ENCODE measurements at regions of chr7 and their contacts with region 1.

Region 1: GRCh38 chr7:156747691-156748090 is 107.1 kb downstream of the RNF32 start:
- DNase-seq: no peak
- H3K4me3 ChIP-seq: no peak overlapping the region
- H3K27ac ChIP-seq: no peak overlapping the region
- H3K4me1 ChIP-seq: no peaks in the 10 kb centered on the region; a peak in 1 of 4 replicates
- H3K27me3 ChIP-seq: no peaks in the 10 kb centered on the region
- CTCF ChIP-seq: no peak
- EP300 ChIP-seq: no peak
- RAD21 ChIP-seq: no peak

Region 2: DNA sequence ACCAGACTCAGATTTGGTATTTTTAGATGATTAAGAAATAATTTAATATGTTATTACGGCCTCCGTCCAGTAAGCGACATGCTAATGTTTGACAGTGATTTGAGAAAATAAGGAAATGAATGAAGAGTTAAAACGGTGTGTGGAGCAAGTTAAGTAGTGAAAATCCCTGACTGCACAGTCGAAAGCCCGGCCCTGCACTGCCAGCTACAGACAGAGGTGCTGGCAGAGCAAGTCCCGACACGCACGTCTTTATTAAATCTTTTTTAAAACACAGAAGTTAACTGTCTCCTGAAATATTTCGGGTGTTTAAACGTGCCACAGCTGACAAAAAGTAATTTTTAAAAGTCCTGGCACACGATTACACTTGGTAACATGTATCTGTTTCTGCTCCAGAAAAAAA is 400.6 kb before region 1 on chr7:
- CTCF ChIA-PET with region 1: no interaction called
- POLR2A ChIA-PET with region 1: no interaction called
- DNase-seq: no peak
- H3K4me3 ChIP-seq: peak overlapping the region; percentile 42 to 56
- H3K27ac ChIP-seq: no peak overlapping the region
- H3K4me1 ChIP-seq: peaks cover 0 to 4% of the 10 kb centered on the region in 2 experiments; a peak in 1 of 4 replicates
- H3K27me3 ChIP-seq: peaks cover 36% of the 10 kb centered on the region; the same call in 1 of the 2 replicates
- CTCF ChIP-seq: no peak
- EP300 ChIP-seq: no peak
- RAD21 ChIP-seq: no peak

Region 3: DNA sequence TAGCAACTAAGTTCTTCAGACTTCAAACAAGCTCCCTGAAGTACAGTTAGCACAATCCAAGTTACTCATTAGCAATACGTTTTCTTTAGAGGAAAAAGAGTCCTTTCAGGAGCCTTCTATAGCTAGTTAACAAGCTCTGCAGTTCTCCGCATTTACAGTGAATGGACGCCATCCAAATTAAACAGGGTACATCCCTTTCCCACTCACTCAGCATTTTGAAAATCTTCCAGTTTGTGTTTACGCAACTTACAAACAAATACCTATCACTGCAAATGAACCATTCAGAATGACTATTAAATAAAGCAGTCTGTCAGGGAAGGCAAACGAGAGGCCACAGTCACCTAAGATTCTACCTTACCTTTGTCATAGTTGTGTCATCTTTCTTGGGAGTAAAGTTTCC is 22.6 kb before region 1 on chr7:
- CTCF ChIA-PET with region 1: interaction called, 21 read pairs
- POLR2A ChIA-PET with region 1: no interaction called
- DNase-seq: no peak
- H3K4me3 ChIP-seq: no peak overlapping the region
- H3K27ac ChIP-seq: no peak overlapping the region
- H3K4me1 ChIP-seq: peaks cover 0 to 17% of the 10 kb centered on the region in 2 experiments; a peak in 2 of 4 replicates
- H3K27me3 ChIP-seq: no peaks in the 10 kb centered on the region
- CTCF ChIP-seq: no peak
- EP300 ChIP-seq: no peak
- RAD21 ChIP-seq: no peak

Region 4: GRCh38 chr7:156889089-156889488 is 141.4 kb after region 1 on chr7:
- CTCF ChIA-PET with region 1: no interaction called
- POLR2A ChIA-PET with region 1: no interaction called
- DNase-seq: no peak
- H3K4me3 ChIP-seq: no peak overlapping the region
- H3K27ac ChIP-seq: no peak overlapping the region
- H3K4me1 ChIP-seq: peaks cover 8 to 9% of the 10 kb centered on the region in 2 experiments; a peak in 3 of 4 replicates
- H3K27me3 ChIP-seq: no peaks in the 10 kb centered on the region
- CTCF ChIP-seq: no peak
- EP300 ChIP-seq: no peak
- RAD21 ChIP-seq: no peak

Measured in SK-N-SH (cell line).